Right ventricle myocardium inferior (tissue), 1 donor: ENCODE measurements at regions of chr12 and their contacts with region 1.

Region 1: DNA sequence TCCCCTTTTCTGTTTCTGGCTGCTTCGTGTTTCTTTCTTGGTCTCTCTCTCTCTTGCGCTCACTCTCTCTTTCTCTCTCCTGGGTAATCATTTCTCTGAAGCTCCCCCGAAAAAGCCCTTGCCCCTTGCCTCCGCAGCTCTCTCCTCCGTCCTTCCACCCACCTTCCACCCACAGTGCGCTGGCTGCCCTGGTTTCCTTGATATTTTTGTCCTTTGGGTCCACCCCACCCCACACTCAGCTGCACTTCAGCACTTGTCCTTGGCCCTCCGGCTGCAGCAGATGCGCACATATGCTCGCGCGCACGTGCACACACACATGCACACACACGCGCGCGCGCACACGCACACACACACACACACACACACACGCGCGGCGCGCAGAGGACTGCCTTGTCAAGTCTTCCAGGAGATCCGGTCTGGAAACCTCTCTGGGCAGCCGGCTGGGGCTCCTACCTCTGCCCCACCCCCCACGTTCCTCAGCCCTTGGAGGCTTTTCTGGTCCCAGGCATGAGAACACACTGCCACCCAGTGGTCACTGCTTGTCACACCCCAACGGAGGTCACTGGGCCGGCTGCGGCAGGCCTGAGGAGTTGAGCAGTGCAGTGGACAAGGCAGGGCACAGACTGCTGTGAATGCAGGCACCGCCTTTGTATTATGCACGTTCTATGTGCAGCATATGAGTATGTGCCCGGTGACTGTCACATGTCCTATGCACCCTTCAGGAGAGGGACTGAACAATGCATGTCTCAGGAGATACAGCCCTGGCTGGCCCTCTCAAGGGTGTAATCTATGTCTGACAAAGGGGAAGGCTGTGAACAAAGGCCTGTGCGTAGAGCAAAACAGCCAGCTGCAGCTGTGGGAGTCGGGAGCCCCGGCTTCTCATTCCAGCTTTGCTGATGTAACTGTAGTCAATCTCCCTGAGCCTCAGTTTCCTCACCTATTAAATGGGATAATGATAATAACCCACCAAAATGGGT is 6.5 kb downstream of the LAG3 start:
- DNase-seq: peak; percentile 94
- ATAC-seq: peak; percentile 97

Region 2: DNA sequence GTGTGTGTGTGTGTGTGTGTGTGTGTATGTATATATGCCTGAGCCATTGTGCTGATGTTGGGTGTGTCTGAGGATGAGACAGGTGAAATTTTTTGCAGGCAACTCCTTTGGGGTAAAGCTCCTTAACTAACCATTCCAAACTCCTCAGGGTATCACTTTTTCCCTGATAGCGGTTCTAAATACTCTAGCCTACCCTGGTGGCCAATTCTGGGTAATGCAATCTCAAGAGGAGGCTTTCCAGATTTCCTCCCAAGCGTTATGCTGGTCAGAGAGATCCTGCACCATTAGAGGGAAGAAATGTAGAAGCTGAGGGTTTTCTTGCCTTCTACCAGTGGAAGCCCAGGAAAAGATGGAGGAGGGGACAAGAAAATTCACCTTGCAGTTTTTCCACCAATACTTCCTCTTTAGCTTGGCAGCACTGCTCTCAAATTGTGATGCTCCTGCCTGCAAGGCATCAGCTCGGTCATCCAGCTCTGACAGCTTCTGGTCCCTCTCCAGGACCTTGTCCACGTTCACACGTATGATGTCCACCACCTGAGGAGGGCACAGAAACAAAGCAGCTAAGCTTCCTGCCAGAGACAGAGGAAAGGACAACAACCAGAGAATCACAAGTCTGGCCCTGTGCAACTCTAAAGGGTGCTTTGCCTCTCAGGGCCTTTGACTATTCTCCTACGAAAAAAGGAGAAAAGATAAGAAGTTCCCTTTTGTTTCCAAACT is 313.2 kb before region 1 on chr12:
- intact Hi-C with region 1: no loop called
- DNase-seq: no peak
- ATAC-seq: no peak

Region 3: GRCh38 chr12:6652391-6652790 is 126.5 kb before region 1 on chr12:
- intact Hi-C with region 1: no loop called
- DNase-seq: no peak
- ATAC-seq: no peak

Region 4: DNA sequence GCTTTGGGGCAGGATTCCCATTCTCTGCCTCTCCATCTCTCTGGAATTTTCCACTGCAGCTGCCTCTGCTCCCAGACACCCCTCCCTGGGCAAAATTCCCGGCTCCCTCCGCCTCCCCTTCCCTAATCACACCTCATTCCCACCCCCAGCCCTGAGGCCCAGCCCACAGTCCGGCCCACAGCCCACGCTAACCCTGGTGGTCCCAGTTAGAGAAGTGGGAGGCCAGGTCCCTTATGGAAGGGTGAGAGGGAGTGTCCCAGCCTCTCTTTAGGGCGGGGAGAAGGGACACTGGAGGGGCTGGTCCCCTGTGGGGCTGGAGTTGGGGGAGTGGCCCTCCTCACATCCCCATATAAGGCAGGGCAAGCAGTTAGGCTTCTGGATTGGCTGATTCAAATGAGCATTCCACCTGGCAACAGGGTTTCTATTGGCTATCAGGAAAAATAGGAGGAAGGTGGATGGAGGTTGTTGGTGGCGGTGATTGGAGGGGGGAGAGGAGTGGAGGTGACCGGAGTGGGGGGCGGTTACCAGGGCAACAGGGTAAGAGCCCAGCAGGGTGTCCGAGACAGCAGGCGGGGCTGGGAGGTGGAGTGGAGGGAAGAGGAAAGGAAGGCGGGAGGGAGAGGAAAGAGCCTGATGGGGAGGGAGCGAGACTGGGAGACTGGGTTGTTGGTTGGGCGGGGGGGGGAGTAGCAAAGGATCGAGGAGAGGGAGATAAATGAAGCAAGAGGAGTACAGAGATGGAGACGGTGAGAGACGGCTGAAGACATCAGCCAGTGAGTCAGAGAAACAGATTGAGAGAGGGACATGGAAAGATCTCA is 14.6 kb before region 1 on chr12:
- intact Hi-C with region 1: no loop called
- DNase-seq: peak; percentile 96
- ATAC-seq: peak; percentile 88

Region 5: DNA sequence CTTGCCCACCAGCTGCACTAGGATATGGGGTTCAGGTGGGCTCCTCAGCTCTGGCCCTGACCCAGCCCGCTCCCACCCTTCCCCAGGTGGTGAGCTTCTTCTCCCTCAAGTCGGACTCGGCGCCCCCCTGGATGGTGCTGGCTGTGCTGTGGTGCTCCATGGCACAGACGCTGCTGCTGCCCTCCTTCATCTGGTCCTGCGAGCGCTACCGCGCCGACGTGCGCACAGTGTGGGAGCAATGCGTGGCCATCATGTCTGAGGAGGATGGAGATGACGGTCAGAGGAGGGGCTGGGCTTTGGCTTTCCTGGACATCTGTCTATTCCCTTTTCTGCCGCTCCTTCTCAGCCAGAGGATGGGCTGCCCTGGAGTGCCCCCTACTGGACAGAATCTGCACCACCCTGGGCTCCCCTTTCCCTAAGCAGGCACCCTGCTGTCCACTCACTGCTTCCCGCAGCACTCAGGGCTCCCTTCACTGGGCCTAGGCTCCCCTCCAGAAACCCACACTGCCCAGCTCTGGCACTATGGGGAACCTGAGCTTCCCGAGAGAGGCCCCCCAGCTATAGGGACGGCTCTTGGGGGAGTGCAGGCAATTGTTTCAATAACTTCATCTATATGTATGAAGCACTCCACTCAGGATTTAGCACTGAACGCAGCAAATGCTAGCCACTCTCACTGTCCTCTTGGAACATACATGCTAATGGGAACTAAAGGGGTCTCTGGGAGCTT is 46.7 kb after region 1 on chr12:
- intact Hi-C with region 1: loop called (anchors 5 kb)
- DNase-seq: peak; percentile 89
- ATAC-seq: peak; percentile 58

Region 6: GRCh38 chr12:7210642-7211151 is 431.8 kb after region 1 on chr12:
- intact Hi-C with region 1: no loop called
- DNase-seq: no peak
- ATAC-seq: peak; percentile 34